Natural killer cell (primary cell): ENCODE measurements at regions of chr1 and their contacts with region 1.

Region 1: DNA sequence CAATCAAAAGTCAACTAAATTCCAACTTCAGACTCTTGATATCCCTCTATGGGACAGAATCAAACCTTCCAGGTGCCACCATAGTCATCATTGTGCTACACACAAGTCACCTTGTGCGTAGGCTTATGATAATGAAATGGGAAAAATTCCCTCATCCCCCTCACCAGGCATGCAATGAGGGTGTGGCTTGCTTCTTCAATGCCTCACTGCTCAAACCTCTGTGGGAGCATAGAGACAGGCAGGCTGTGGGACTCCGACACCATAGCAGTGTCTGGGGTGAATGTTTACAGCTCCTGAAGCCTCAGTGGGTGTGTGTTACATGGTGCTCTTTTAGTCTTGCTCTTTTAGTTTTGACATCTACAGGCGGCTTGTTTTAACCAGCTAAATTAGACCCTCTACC is 42.4 kb downstream of the ZNF697 start:
- DNase-seq: no peak
- ATAC-seq: no peak
- H3K4me3 ChIP-seq: no peak overlapping the region
- H3K4me3 Mint-ChIP-seq: no peak overlapping the region
- H3K27ac ChIP-seq: no peak overlapping the region
- H3K27ac Mint-ChIP-seq: no peak overlapping the region
- H3K4me1 ChIP-seq: no peaks in the 10 kb centered on the region
- H3K4me1 Mint-ChIP-seq: no peaks in the 10 kb centered on the region
- H3K27me3 ChIP-seq: no peaks in the 10 kb centered on the region
- H3K27me3 Mint-ChIP-seq: peaks cover 0 to 2% of the 10 kb centered on the region in 2 donors
- CTCF ChIP-seq: no peak

Region 2: DNA sequence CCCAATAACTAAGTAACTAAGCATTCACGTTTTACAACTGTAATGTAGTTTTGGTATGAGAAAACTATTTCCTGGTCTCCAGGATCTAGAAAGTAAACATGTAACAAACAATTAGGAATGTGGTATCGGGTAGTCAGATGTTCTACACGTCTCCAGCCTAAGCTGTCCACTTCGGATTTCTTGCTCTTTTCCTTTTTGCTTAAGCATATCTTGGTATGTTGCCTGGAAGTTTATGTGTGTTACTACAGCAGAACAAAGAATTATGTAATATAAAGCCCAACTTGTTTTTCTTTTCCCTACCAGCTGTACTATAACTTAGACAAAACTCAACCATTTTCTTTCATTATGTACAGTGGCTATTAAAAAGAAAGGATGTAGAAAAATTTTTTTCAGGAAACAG is 444.8 kb before region 1 on chr1:
- intact Hi-C with region 1: no loop called
- DNase-seq: no peak
- ATAC-seq: no peak
- H3K4me3 ChIP-seq: no peak overlapping the region
- H3K4me3 Mint-ChIP-seq: no peak overlapping the region
- H3K27ac ChIP-seq: no peak overlapping the region
- H3K27ac Mint-ChIP-seq: no peak overlapping the region
- H3K4me1 ChIP-seq: no peaks in the 10 kb centered on the region
- H3K4me1 Mint-ChIP-seq: no peaks in the 10 kb centered on the region
- H3K27me3 ChIP-seq: no peaks in the 10 kb centered on the region
- H3K27me3 Mint-ChIP-seq: no peaks in the 10 kb centered on the region
- CTCF ChIP-seq: no peak

Region 3: DNA sequence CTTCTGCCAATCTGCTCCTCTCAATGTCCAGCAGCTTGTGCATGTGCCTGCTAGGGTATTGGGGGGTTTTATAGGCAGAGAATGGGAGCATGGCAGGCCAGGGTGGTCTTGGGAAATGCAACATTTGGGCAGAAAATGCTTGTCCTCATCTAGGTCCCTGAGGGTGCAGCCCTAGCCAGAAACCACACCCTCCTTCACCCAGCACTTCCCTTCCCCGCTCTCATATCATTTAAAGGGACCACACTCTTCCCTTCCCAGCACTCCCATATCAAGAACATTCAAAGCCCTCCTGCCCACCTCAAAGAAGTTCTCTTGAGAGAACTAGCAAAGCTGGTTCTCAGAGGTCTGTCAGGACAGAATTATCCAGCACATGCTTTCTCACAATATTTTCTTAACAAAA is 36.6 kb before region 1 on chr1:
- intact Hi-C with region 1: loop called (anchors 1 kb)
- DNase-seq: no peak
- ATAC-seq: no peak
- H3K4me3 ChIP-seq: no peak overlapping the region
- H3K4me3 Mint-ChIP-seq: no peak overlapping the region
- H3K27ac ChIP-seq: no peak overlapping the region
- H3K27ac Mint-ChIP-seq: no peak overlapping the region
- H3K4me1 ChIP-seq: peaks cover 9% of the 10 kb centered on the region
- H3K4me1 Mint-ChIP-seq: no peaks in the 10 kb centered on the region
- H3K27me3 ChIP-seq: no peaks in the 10 kb centered on the region
- H3K27me3 Mint-ChIP-seq: peaks cover 6 to 28% of the 10 kb centered on the region in 2 donors
- CTCF ChIP-seq: no peak